ENCODE measurements at regions of chr1 and their contacts with region 1.

Region 1: DNA sequence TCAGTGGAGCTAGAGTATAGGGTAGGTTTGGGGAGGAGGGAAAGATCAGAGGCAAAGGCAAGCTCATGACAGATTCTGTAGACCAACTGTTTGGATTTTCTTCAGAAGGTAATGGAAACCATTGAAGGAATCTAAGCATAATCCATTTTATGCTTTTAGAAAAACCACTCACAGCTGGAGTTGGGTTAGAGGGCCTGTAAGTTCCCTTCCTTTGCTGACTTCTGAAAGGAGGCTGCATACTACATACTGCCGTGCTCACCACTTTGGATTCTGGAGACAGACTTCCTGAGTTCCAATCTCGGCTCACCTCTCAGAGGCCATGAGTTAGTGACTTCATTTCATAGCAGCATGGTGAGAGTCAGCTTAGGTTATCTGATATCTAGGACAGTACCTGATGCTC is 6.4 kb upstream of the SYT2 start:
- DNase-seq: no peak
- H3K4me3 ChIP-seq: no peak overlapping the region
- H3K27ac ChIP-seq: no peak overlapping the region
- H3K4me1 ChIP-seq: peaks cover 0 to 15% of the 10 kb centered on the region in 2 experiments; a peak in 1 of 4 replicates
- H3K27me3 ChIP-seq: no peaks in the 10 kb centered on the region
- CTCF ChIP-seq: no peak
- EP300 ChIP-seq: no peak
- RAD21 ChIP-seq: no peak

Region 2: DNA sequence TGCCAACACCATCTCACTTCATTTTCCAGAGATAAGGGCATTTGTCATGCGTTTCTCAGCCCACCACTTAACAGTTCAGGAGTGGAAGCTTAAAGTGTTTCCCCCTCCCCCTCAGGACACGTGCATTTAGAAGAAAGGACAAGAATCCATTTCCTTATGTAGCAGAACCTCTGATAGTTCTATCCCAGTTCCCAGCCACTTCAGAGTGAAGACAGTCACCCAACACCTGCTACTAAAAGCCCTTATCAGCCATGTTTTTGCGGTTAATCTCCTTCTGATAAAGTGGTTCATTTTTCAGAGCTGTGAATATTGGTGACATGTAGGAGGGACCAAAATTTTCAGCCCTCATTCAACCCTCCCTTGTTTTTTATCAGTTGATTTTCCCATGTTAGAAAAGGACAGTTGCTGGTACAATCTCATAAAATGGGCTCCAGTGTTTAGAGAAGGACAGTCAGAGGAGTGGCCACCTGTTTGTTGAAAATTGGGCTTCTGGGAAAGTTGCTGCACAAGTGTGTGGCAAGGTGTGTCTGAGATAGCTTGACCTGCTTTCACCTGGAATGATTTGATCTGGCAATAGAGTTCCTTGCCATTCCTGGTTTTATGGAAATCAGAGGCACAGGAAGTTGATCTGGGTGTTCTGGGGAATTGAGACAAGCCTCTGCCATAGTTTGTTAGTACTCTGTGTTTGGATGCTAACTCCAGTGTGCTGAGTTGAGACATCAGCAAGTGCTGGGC is 254.1 kb before region 1 on chr1:
- CTCF ChIA-PET with region 1: interaction called, 67 read pairs
- POLR2A ChIA-PET with region 1: no interaction called
- DNase-seq: no peak
- H3K4me3 ChIP-seq: no peak overlapping the region
- H3K27ac ChIP-seq: no peak overlapping the region
- H3K4me1 ChIP-seq: peaks cover 0 to 14% of the 10 kb centered on the region in 2 experiments; a peak in 3 of 4 replicates
- H3K27me3 ChIP-seq: no peaks in the 10 kb centered on the region
- CTCF ChIP-seq: no peak
- EP300 ChIP-seq: no peak
- RAD21 ChIP-seq: no peak

Region 3: DNA sequence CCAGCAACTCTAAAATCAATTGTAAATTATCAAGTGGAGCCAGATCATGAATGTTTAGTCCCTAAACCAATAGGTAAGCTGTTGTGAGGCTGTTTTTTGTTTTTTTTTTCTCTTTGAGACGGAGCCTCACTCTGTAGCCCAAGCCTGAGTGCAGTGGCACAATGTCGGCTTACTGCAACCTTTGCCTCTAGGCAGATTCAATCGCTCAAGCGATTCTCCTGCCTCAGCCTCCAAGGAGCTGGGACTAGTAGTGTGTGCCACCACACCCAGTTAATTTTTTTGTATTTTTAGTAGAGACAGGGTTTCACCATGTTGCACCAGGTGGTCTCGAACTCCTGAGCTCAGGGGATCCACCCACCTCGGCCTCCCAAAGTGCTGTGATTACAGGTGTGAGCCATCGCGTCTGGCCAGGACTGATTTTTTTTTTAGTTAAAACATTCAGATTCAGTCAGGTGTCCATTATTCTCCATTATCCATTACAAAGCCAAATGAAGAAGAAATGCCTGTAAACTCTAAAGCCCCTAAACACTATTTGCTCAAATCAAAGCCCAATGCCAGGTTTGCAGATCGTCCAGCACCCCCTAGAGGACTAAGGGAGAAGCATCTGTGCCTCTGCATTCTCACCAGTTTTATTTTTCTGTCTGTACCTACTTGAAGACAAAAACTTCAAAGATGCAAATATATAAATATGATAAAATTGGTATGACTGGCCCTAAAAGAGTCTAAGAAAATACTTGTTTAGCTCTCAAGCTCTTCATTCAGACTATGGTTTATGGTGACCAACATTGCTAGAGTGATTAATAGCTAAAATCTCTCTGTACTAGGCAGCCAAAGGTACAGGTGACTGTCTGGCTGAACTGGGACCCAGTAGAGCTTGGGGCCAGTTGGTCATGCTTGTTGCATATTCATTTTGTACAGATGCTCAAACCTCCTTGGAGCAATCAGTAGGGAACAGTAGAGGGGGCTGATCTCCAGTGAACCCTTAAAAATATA is 145.0 kb before region 1 on chr1:
- CTCF ChIA-PET with region 1: interaction called, 12 read pairs
- POLR2A ChIA-PET with region 1: no interaction called
- DNase-seq: no peak
- H3K4me3 ChIP-seq: no peak overlapping the region
- H3K27ac ChIP-seq: peak overlapping the region in 1 of 2 experiments; percentile 36; a peak in 1 of 4 replicates
- H3K4me1 ChIP-seq: peaks cover 46 to 56% of the 10 kb centered on the region in 2 experiments
- H3K27me3 ChIP-seq: no peaks in the 10 kb centered on the region
- CTCF ChIP-seq: peak; percentile 93
- EP300 ChIP-seq: no peak
- RAD21 ChIP-seq: peak; percentile 87

Region 4: GRCh38 chr1:202625416-202626360 is 91.0 kb before region 1 on chr1:
- CTCF ChIA-PET with region 1: interaction called, 12 read pairs
- POLR2A ChIA-PET with region 1: no interaction called
- DNase-seq: peak; percentile 92
- H3K4me3 ChIP-seq: no peak overlapping the region; a peak in 1 of 4 replicates
- H3K27ac ChIP-seq: no peak overlapping the region
- H3K4me1 ChIP-seq: peaks cover 0 to 7% of the 10 kb centered on the region in 2 experiments; a peak in 3 of 4 replicates
- H3K27me3 ChIP-seq: no peaks in the 10 kb centered on the region
- CTCF ChIP-seq: peak; percentile 64
- EP300 ChIP-seq: no peak
- RAD21 ChIP-seq: peak; percentile 69

Region 5: GRCh38 chr1:202671122-202671797 is 45.4 kb before region 1 on chr1:
- CTCF ChIA-PET with region 1: interaction called, 12 read pairs
- POLR2A ChIA-PET with region 1: no interaction called
- DNase-seq: no peak
- H3K4me3 ChIP-seq: no peak overlapping the region
- H3K27ac ChIP-seq: no peak overlapping the region
- H3K4me1 ChIP-seq: no peaks in the 10 kb centered on the region
- H3K27me3 ChIP-seq: peaks cover 10% of the 10 kb centered on the region; the same call in 1 of the 2 replicates
- CTCF ChIP-seq: no peak
- EP300 ChIP-seq: no peak
- RAD21 ChIP-seq: no peak

Region 6: DNA sequence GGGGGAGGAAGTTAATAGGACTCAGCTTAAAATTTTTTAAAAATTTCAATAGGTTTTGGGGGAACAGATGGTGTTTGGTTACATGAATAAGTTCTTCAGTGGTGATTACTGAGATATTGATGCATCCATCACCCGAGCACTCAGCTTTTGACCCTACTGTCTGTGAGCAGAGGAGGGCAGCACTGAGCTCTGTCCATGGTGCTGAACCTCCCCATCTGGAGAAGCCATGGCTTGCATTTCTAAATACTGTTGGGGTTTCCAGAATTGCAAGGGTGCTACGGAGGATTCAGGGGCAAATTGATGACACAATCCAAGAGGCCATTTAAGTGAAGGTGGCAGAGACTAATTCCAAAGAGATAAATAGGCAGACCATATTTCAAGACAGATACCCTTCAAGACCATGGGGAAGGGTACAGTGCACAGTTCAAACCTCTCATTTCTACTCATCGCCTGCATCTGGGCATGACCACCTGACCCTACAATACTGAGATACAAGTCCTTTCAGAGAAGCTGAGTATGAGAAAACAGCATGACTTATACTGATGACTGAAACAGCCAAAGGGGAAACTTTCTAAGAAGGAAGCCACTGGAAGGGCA is 23.6 kb before region 1 on chr1:
- CTCF ChIA-PET with region 1: interaction called, 21 read pairs
- POLR2A ChIA-PET with region 1: no interaction called
- DNase-seq: peak; percentile 54
- H3K4me3 ChIP-seq: no peak overlapping the region
- H3K27ac ChIP-seq: no peak overlapping the region
- H3K4me1 ChIP-seq: peaks cover 0 to 8% of the 10 kb centered on the region in 2 experiments; a peak in 1 of 4 replicates
- H3K27me3 ChIP-seq: peaks cover 26% of the 10 kb centered on the region
- CTCF ChIP-seq: peak; percentile 31; the same call in 1 of the 2 replicates
- EP300 ChIP-seq: no peak
- RAD21 ChIP-seq: no peak; the same call in 1 of the 2 replicates

Measured in SK-N-SH (cell line).